ENCODE measurements at regions of chr17 and their contacts with region 1.

Region 1: GRCh38 chr17:21043286-21044232 is 748 bp upstream of the USP22 start:
- DNase-seq: peak; percentile 95 to 99 (median 97)
- H3K4me3 ChIP-seq: peak overlapping the region; percentile 3 to 62
- H3K4me3 Mint-ChIP-seq: peak overlapping the region; percentile 80 to 88 (median 85)
- H3K27ac ChIP-seq: peak overlapping the region; percentile 97
- H3K27ac Mint-ChIP-seq: peak overlapping the region; percentile 93 to 98 (median 95)
- H3K4me1 ChIP-seq: peaks cover 28% of the 10 kb centered on the region
- H3K4me1 Mint-ChIP-seq: peaks cover 18 to 48% (median 28%) of the 10 kb centered on the region in 4 donors
- H3K27me3 ChIP-seq: no peaks in the 10 kb centered on the region
- H3K27me3 Mint-ChIP-seq: no peaks in the 10 kb centered on the region

Region 2: GRCh38 chr17:20908373-20909273 is 134.9 kb before region 1 on chr17:
- CTCF ChIA-PET with region 1: interaction called, 9 read pairs
- POLR2A ChIA-PET with region 1: no interaction called
- intact Hi-C with region 1: loop called (anchors 1 kb)
- DNase-seq: peak; percentile 67 to 73 (median 69)
- H3K4me3 ChIP-seq: peak overlapping the region; percentile 61 to 76
- H3K4me3 Mint-ChIP-seq: peak overlapping the region; percentile 50 to 84 (median 79)
- H3K27ac ChIP-seq: peak overlapping the region; percentile 37
- H3K27ac Mint-ChIP-seq: peak overlapping the region in 5 of 7 donors; percentile 31 to 78 (median 52)
- H3K4me1 ChIP-seq: peaks cover 5% of the 10 kb centered on the region
- H3K4me1 Mint-ChIP-seq: peaks cover 0 to 5% (median 4%) of the 10 kb centered on the region in 4 donors
- H3K27me3 ChIP-seq: no peaks in the 10 kb centered on the region
- H3K27me3 Mint-ChIP-seq: peaks cover 0 to 2% of the 10 kb centered on the region in 2 donors

Region 3: GRCh38 chr17:21019976-21020586 is 23.5 kb before region 1 on chr17:
- CTCF ChIA-PET with region 1: interaction called, 19 read pairs
- POLR2A ChIA-PET with region 1: interaction called, 6 read pairs
- intact Hi-C with region 1: loop called (anchors 1 kb)
- DNase-seq: peak; percentile 27 to 62 (median 33)
- H3K4me3 ChIP-seq: no peak overlapping the region
- H3K4me3 Mint-ChIP-seq: no peak overlapping the region
- H3K27ac ChIP-seq: no peak overlapping the region
- H3K27ac Mint-ChIP-seq: peak overlapping the region in 4 of 7 donors; percentile 23 to 79 (median 64)
- H3K4me1 ChIP-seq: peaks cover 24% of the 10 kb centered on the region
- H3K4me1 Mint-ChIP-seq: peaks cover 22 to 46% (median 29%) of the 10 kb centered on the region in 4 donors
- H3K27me3 ChIP-seq: no peaks in the 10 kb centered on the region
- H3K27me3 Mint-ChIP-seq: no peaks in the 10 kb centered on the region

Region 4: GRCh38 chr17:21098934-21099689 is 55.6 kb after region 1 on chr17:
- CTCF ChIA-PET with region 1: interaction called, 16 read pairs
- POLR2A ChIA-PET with region 1: interaction called, 22 read pairs
- intact Hi-C with region 1: loop called (anchors 1 kb)
- DNase-seq: peak; percentile 61 to 73 (median 65)
- H3K4me3 ChIP-seq: peak overlapping the region; percentile 68 to 70
- H3K4me3 Mint-ChIP-seq: peak overlapping the region; percentile 85 to 96 (median 90)
- H3K27ac ChIP-seq: no peak overlapping the region
- H3K27ac Mint-ChIP-seq: peak overlapping the region; percentile 19 to 83 (median 48)
- H3K4me1 ChIP-seq: peaks cover 13% of the 10 kb centered on the region
- H3K4me1 Mint-ChIP-seq: peaks cover 9 to 14% (median 11%) of the 10 kb centered on the region in 4 donors
- H3K27me3 ChIP-seq: no peaks in the 10 kb centered on the region
- H3K27me3 Mint-ChIP-seq: peaks cover 0 to 12% of the 10 kb centered on the region in 2 donors

Region 5: GRCh38 chr17:21252796-21253645 is 209.5 kb after region 1 on chr17 and contains the start of gene NATD1:
- CTCF ChIA-PET with region 1: no interaction called
- POLR2A ChIA-PET with region 1: interaction called, 4 read pairs
- intact Hi-C with region 1: loop called (anchors 2 kb)
- DNase-seq: peak; percentile 74 to 86 (median 80)
- H3K4me3 ChIP-seq: peak within 1 kb of the TSS; percentile 38 to 71
- H3K4me3 Mint-ChIP-seq: peak within 1 kb of the TSS; percentile 88 to 95 (median 90)
- H3K27ac ChIP-seq: peak within 1 kb of the TSS; percentile 62
- H3K27ac Mint-ChIP-seq: peak within 1 kb of the TSS; percentile 90 to 95 (median 91)
- H3K4me1 ChIP-seq: peaks cover 27% of the 10 kb centered on the region
- H3K4me1 Mint-ChIP-seq: peaks cover 24 to 59% (median 34%) of the 10 kb centered on the region in 4 donors
- H3K27me3 ChIP-seq: no peaks in the 10 kb centered on the region
- H3K27me3 Mint-ChIP-seq: no peaks in the 10 kb centered on the region
- total RNA-seq, gene NATD1: 13.1 to 13.5 TPM

Region 6: GRCh38 chr17:21511363-21512198 is 468.0 kb after region 1 on chr17:
- CTCF ChIA-PET with region 1: interaction called, 7 read pairs
- POLR2A ChIA-PET with region 1: no interaction called
- intact Hi-C with region 1: loop called (anchors 5 kb)
- DNase-seq: peak; percentile 48 to 62 (median 55)
- H3K4me3 ChIP-seq: peak overlapping the region in 1 of 2 donors; percentile 48
- H3K4me3 Mint-ChIP-seq: peak overlapping the region; percentile 26 to 77 (median 73)
- H3K27ac ChIP-seq: peak overlapping the region; percentile 15
- H3K27ac Mint-ChIP-seq: peak overlapping the region in 2 of 7 donors; percentile 0 to 13
- H3K4me1 ChIP-seq: peaks cover 4% of the 10 kb centered on the region
- H3K4me1 Mint-ChIP-seq: peaks cover 5 to 11% (median 9%) of the 10 kb centered on the region in 4 donors
- H3K27me3 ChIP-seq: peaks cover 8% of the 10 kb centered on the region
- H3K27me3 Mint-ChIP-seq: peaks cover 17 to 21% of the 10 kb centered on the region in 2 donors

Measured in CD4-positive, alpha-beta memory T cell (primary cell).